A549 (cell line): ENCODE measurements at regions of chr11 and their contacts with region 1.

Region 1: DNA sequence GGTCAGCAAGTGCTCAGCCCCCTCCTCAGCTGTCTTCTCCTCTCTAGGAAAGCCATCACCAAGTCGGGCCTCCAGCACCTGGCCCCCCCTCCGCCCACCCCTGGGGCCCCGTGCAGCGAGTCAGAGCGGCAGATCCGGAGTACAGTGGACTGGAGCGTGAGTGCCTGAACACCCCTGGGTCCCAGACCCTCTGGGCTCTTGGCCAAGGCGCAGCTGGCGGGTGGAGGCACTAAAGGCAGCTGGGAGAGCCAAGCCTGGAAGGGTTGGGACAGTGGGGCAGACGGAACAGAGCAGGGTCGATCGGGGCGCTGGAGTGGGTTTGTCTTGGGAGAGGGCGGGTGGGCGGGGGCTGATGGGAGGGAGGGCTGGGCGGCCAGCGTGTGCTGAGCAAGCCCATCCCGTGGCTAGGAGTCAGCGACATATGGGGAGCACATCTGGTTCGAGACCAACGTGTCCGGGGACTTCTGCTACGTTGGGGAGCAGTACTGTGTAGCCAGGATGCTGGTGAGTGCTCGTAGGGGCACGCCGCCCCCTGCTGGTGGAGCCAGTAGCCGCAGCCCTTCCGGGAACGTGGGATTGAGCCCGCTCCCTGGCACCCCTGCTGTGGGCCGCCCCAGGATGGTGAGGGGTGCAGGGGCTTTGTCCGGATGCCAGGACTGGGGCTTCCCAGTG is 14.1 kb upstream of the MDK start:
- DNase-seq: peak in 1 of 2 experiments; percentile 46
- ATAC-seq: peak; percentile 59 to 83
- H3K4me3 ChIP-seq: no peak overlapping the region
- H3K27ac ChIP-seq: 0 out of 6 replicates have a peak overlapping the region, but pooled peaks of 1 of the 2 experiments have one; percentile 30
- H3K4me1 ChIP-seq: peaks cover 10% of the 10 kb centered on the region
- CTCF ChIP-seq: peak; percentile 71
- EP300 ChIP-seq: no peak
- POLR2A ChIP-seq: no peak
- RAD21 ChIP-seq: peak; percentile 57 to 61; a peak in 4 of 5 replicates

Region 2: DNA sequence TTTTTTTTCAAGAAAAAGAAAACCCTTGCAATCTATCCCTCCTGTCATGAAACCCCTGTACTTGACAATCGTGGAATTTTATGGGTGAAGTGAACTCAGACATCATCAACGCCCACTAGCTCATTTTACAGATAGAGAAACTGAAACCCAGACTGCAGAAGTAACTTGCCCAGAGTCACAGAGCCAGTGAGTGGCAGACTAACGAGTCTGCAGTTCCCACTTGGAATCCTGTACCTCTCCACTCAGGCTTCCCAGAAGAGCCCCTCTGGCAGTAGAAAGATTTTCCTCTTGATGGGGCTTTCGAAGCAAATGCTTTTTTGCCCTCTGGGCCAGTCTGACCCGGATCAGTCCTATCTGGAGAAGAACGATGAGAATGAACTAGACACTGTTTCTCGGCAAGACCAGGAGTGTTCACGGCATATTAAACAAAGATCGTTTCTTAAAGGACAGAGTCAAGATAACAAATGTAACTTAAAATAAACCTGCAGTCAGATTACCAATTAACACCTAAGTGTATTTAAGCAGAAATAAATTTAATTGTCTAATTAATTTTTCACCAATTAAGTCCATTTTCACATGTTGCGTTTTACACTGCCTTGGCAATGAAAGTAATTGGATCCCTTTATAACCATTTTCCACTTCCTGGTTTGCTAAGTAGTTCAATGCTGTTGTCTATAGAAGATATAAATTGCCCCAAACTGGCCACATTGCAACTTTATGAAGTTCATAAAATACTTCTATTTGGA is 151.2 kb before region 1 on chr11:
- CTCF ChIA-PET with region 1: no interaction called
- POLR2A ChIA-PET with region 1: no interaction called
- DNase-seq: no peak
- ATAC-seq: no peak
- H3K4me3 ChIP-seq: no peak overlapping the region
- H3K27ac ChIP-seq: no peak overlapping the region
- H3K4me1 ChIP-seq: no peaks in the 10 kb centered on the region
- CTCF ChIP-seq: no peak
- EP300 ChIP-seq: no peak
- POLR2A ChIP-seq: no peak
- RAD21 ChIP-seq: no peak

Region 3: DNA sequence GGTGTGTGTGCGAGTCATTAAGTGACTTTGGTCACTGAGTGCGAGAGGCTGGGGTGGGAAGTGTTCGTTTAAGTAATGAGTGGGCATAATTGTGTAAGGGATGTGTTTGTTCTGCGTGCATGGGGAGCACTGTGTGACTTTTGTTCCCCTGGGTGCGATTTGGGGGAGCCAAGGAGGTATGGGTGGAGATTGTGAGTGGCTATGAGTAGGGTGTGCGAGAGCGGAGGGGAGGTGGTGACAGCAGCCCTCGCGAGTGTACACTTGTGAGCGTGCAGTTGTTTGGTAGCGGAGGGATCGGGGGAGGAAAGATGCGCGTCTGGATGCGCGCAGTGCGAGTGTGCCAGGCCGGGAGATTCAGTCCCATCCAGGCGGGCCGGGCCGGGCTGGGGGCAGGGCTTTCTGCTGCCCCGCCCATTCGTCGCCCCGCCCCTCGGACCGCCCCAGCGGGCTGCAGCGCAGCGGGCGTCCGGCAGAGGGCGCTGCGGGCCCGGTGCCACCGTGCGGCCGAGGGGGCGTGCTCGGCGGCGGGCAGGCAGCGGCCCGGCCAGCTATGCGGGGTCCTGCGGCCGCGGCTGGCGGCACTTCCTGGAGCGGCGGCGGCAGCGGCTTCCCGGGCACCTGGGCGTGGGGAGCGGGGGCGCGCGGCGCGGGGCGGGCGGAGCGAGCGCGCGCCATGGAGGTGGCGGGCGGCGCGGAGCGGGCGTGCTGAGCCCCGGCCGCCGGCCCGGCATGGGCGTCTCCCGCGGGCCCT is 20.3 kb before region 1 on chr11 and contains the start of gene DGKZ:
- CTCF ChIA-PET with region 1: interaction called, 325 read pairs
- POLR2A ChIA-PET with region 1: no interaction called
- DNase-seq: peak; percentile 81 to 82
- ATAC-seq: peak; percentile 83 to 85
- H3K4me3 ChIP-seq: peak within 1 kb of the TSS; percentile 84
- H3K27ac ChIP-seq: peak within 1 kb of the TSS; percentile 77 to 96
- H3K4me1 ChIP-seq: peaks cover 16% of the 10 kb centered on the region
- CTCF ChIP-seq: peak; percentile 98
- EP300 ChIP-seq: no peak
- POLR2A ChIP-seq: peak; percentile 49
- RAD21 ChIP-seq: peak; percentile 17 to 52; a peak in 3 of 5 replicates
- polyA plus RNA-seq, gene DGKZ: 12.8 and 14.5 TPM in 2 replicates

Region 4: GRCh38 chr11:46850829-46851380 is 483.5 kb after region 1 on chr11:
- CTCF ChIA-PET with region 1: no interaction called
- POLR2A ChIA-PET with region 1: no interaction called
- DNase-seq: no peak
- ATAC-seq: no peak
- H3K4me3 ChIP-seq: no peak overlapping the region
- H3K27ac ChIP-seq: no peak overlapping the region
- H3K4me1 ChIP-seq: peaks cover 4% of the 10 kb centered on the region; the same call in 2 of the 3 replicates
- CTCF ChIP-seq: no peak
- EP300 ChIP-seq: no peak
- POLR2A ChIP-seq: no peak
- RAD21 ChIP-seq: no peak